ENCODE measurements at regions of chr15 and their contacts with region 1.

Region 1: GRCh38 chr15:84981054-84981710 is 474 bp upstream of the PDE8A start:
- DNase-seq: peak; percentile 97
- ATAC-seq: peak; percentile 80
- H3K4me3 Mint-ChIP-seq: peak overlapping the region; percentile 84
- H3K27ac Mint-ChIP-seq: peak overlapping the region; percentile 89
- H3K4me1 Mint-ChIP-seq: peaks cover 43% of the 10 kb centered on the region
- H3K27me3 Mint-ChIP-seq: no peaks in the 10 kb centered on the region

Region 2: GRCh38 chr15:84716036-84716799 is 265.0 kb before region 1 on chr15 and contains the start of gene SEC11A:
- CTCF ChIA-PET with region 1: no interaction called
- POLR2A ChIA-PET with region 1: no interaction called
- intact Hi-C with region 1: loop called in 1 of 2 experiments (anchors 1 kb)
- DNase-seq: peak; percentile 94
- ATAC-seq: peak; percentile 89
- H3K4me3 Mint-ChIP-seq: peak within 1 kb of the TSS; percentile 98
- H3K27ac Mint-ChIP-seq: peak within 1 kb of the TSS; percentile 97
- H3K4me1 Mint-ChIP-seq: peaks cover 55% of the 10 kb centered on the region
- H3K27me3 Mint-ChIP-seq: no peaks in the 10 kb centered on the region
- total RNA-seq, gene SEC11A: 66.6 to 111 TPM

Region 3: GRCh38 chr15:84992157-84992944 is 11.2 kb after region 1 on chr15:
- CTCF ChIA-PET with region 1: interaction called, 4 read pairs
- POLR2A ChIA-PET with region 1: interaction called, 5 read pairs
- intact Hi-C with region 1: loop called in 1 of 2 experiments (anchors 1 kb)
- DNase-seq: peak; percentile 72
- ATAC-seq: peak; percentile 89
- H3K4me3 Mint-ChIP-seq: no peak overlapping the region
- H3K27ac Mint-ChIP-seq: peak overlapping the region; percentile 45
- H3K4me1 Mint-ChIP-seq: peaks cover 52% of the 10 kb centered on the region
- H3K27me3 Mint-ChIP-seq: no peaks in the 10 kb centered on the region

Region 4: GRCh38 chr15:85010386-85011159 is 29.4 kb after region 1 on chr15:
- CTCF ChIA-PET with region 1: no interaction called
- POLR2A ChIA-PET with region 1: no interaction called
- intact Hi-C with region 1: no loop called
- DNase-seq: no peak
- ATAC-seq: no peak
- H3K4me3 Mint-ChIP-seq: no peak overlapping the region
- H3K27ac Mint-ChIP-seq: no peak overlapping the region
- H3K4me1 Mint-ChIP-seq: peaks cover 28% of the 10 kb centered on the region
- H3K27me3 Mint-ChIP-seq: no peaks in the 10 kb centered on the region

Region 5: GRCh38 chr15:85073556-85074194 is 92.5 kb after region 1 on chr15:
- CTCF ChIA-PET with region 1: interaction called, 4 read pairs
- POLR2A ChIA-PET with region 1: interaction called, 5 read pairs
- intact Hi-C with region 1: loop called (anchors 1 to 5 kb)
- DNase-seq: peak; percentile 58
- ATAC-seq: peak; percentile 100
- H3K4me3 Mint-ChIP-seq: peak overlapping the region; percentile 26
- H3K27ac Mint-ChIP-seq: peak overlapping the region; percentile 89
- H3K4me1 Mint-ChIP-seq: peaks cover 18% of the 10 kb centered on the region
- H3K27me3 Mint-ChIP-seq: no peaks in the 10 kb centered on the region

Region 6: DNA sequence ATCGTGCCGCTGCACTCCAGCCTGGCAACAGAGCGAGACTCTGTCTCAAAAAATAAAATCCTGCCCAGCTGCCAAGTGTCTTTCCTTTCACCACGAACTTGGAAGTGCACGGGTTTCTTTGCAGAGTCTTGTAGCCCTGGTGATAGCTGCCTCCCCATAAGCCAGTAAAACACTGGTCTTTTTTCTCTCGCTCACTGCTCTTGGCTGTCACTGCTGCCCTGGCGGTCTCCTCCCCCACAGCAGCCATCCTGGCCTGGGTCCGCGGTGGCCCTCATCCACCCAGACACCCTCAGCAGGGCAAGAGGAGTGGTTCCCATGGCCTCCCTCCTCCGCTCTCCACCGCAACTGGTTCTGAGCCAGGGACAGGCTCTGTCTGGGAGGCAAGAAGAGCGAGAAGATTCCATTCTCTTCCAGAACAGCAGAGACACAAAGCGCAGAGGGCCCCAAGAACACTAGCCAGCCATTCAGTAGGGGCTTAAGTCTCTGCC is 769.2 kb after region 1 on chr15:
- CTCF ChIA-PET with region 1: no interaction called
- POLR2A ChIA-PET with region 1: no interaction called
- intact Hi-C with region 1: no loop called
- DNase-seq: peak; percentile 2
- ATAC-seq: no peak
- H3K4me3 Mint-ChIP-seq: no peak overlapping the region
- H3K27ac Mint-ChIP-seq: no peak overlapping the region
- H3K4me1 Mint-ChIP-seq: peaks cover 30% of the 10 kb centered on the region
- H3K27me3 Mint-ChIP-seq: no peaks in the 10 kb centered on the region

Measured in activated CD4-positive, alpha-beta T cell treated with anti-CD3 and anti-CD28 coated beads for 36 hours (primary cell).